ENCODE measurements at regions of chr12 and their contacts with region 1.

Region 1: GRCh38 chr12:98373025-98373554 is 142.3 kb upstream of the TMPO start:
- ATAC-seq: peak in 6 of 8 experiments; percentile 32 to 88 (median 68)
- H3K4me3 ChIP-seq: no peak overlapping the region
- H3K27ac ChIP-seq: no peak overlapping the region
- H3K4me1 ChIP-seq: peaks cover 0 to 7% of the 10 kb centered on the region in 2 donors

Region 2: DNA sequence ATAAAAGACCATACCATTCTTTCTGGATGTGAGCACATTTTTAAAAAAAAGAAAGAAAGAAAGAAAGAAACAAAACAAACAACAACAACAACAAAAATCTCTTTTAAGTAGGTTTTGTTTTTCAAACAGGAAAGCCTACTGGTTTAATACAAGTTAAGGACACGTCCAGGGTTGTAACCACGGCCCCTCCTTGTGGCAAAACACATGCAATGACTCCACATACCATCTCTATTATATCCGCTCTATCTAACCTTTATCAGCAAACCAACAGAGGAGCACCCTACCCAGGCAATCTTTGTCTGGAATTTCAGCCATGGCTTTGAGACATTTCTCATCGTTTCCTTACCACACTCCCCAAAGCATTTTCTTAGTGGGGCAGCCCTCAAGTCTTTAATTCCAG is 218.2 kb before region 1 on chr12:
- in situ Hi-C with region 1: loop called in 1 of 9 experiments (anchors 25 kb)
- ATAC-seq: peak; percentile 69 to 98 (median 82)
- H3K4me3 ChIP-seq: no peak overlapping the region
- H3K27ac ChIP-seq: no peak overlapping the region
- H3K4me1 ChIP-seq: peaks cover 3 to 6% of the 10 kb centered on the region in 2 donors